ENCODE measurements at regions of chr21 and their contacts with region 1.

Region 1: GRCh38 chr21:45596704-45597318 is 46.7 kb upstream of the PCBP3 start:
- DNase-seq: peak; percentile 87
- CTCF ChIP-seq: peak; percentile 91

Region 2: DNA sequence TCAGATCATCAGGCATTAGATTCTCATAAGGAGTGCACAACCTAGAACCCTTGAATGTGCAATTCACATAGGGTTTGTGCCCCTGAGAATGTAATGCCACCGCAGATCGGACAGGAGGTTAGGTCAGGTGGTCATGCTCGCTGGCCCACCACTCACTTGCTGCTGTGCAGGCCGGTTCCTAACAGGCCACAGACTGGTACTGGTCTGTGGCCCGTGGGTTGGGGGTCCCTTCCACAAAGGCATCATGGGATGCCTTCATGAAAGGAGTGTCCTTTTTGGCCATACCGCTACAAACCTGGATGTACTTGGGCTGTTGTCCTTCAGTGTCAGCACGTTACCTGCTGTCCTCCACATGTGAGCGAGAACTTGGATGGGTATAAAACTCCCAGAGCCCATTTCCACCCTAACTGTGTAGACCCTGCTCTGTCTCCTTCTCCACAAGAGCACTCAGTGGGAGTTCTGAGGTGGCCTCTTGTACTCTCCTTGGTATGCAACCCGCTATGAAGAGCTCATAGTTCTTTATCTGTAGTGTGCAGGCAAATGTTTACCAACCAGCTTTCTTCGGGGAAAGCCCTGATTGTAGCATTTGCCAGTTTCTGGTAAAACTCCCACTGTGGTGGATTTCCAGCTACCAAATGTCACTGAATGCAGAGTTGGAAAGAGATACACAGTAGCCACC is 12.8 kb before region 1 on chr21:
- CTCF ChIA-PET with region 1: interaction called, 10 read pairs
- POLR2A ChIA-PET with region 1: no interaction called
- DNase-seq: no peak
- CTCF ChIP-seq: no peak

Region 3: DNA sequence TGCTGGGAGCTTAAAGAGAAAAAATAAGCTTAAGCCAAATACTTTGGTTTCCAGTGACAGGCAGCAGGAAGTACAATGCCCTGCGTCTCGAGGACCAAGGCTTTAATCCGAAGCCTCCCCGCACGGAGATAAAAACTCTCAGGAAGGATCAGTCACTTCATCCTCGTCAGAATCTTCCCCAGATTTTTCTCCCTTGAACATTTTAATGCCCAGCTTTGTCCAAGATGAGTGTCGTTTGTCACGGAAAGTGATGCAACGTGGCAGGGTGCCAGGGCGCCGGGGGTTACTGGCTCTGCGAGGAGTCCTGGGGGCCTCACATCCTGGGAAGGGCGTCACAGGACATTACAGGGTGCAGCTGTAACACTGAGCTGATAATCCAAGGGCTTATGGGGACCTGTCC is 21.5 kb after region 1 on chr21:
- CTCF ChIA-PET with region 1: interaction called, 14 read pairs
- POLR2A ChIA-PET with region 1: no interaction called
- DNase-seq: no peak
- CTCF ChIP-seq: no peak